ENCODE measurements at regions of chr19 and their contacts with region 1.

Region 1: GRCh38 chr19:35269421-35270117 is 807 bp downstream of the USF2 start:
- DNase-seq: peak; percentile 82 to 90 (median 88)
- H3K4me3 ChIP-seq: peak overlapping the region; percentile 49 to 92 (median 70)
- H3K27ac ChIP-seq: peak overlapping the region; percentile 75 to 99 (median 94)
- H3K27me3 ChIP-seq: no peaks in the 10 kb centered on the region
- CTCF ChIP-seq: peak; percentile 42 to 93 (median 75)

Region 2: DNA sequence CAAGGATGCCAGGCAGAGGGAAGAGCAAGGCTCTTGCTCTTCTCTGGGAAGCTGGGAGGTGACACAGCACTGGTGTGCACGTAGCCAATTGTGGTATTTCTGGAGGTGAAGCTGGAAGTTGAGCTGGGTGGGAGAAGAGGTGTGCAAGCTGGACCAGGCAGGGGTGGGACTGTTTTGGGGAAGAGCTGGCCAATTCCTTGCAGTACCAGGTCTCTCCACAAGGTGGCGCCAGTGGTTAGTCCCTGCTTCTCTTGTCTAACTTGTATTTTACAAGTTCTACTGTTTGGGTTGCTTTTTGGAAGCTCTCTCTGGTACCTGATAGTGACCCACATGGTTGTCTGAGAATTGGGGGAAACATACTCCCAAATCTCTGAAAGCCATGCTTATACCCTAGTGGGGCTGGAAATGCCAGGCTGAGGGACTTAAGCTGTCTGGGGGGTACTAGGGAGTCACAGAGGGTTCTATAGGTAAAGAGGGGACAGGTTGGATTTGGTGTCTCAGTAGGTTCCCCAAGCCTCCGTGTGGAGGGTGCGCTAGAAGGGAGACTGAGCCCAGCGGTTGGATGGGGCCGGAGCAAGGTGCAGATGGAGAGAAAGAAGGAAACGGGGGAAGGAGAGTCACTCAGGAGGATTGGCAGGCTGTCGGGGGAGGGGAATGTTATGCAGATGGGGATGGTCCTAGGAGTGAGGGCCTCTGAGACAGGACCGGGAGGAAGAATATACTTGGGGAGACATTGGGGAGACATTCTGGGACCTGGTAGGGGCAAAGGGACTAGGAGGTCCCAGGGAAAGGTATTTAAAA is 225.1 kb before region 1 on chr19:
- intact Hi-C with region 1: loop called in 1 of 2 experiments (anchors 10 kb)
- DNase-seq: peak in 9 of 10 donors; percentile 73 to 84 (median 79)
- H3K4me3 ChIP-seq: no peak overlapping the region
- H3K27ac ChIP-seq: peak overlapping the region in 53 of 59 donors; percentile 7 to 99 (median 74)
- H3K27me3 ChIP-seq: no peaks in the 10 kb centered on the region
- CTCF ChIP-seq: peak; percentile 92 to 100 (median 98)

Region 3: GRCh38 chr19:35140962-35141637 is 128.5 kb before region 1 on chr19:
- intact Hi-C with region 1: loop called (anchors 1 to 2 kb)
- DNase-seq: peak; percentile 81 to 97 (median 94)
- H3K4me3 ChIP-seq: peak overlapping the region; percentile 16 to 80 (median 61)
- H3K27ac ChIP-seq: peak overlapping the region in 55 of 59 donors; percentile 13 to 99 (median 89)
- H3K27me3 ChIP-seq: peaks cover 0 to 3% (median 0%) of the 10 kb centered on the region in 45 donors
- CTCF ChIP-seq: peak in 53 of 56 donors; percentile 15 to 72 (median 48)

Region 4: DNA sequence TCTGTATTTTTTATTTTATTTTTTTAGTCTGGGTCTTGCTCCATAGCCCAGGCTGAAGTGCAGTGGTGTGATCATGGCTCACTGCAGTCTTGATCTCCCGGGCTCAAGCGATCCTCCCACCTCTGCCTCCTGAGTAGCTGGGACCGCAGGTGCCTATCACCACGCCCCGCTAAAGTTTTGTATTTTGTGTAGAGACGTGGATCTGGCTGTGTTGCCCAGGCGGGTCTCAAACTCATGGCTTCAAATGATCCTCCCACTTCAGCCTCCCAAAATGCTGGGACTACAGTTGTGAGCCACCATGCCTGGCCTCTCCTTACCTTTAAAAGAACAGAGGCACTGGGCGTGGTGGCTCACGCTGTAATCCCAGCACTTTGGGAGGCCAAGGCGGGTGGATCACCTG is 18.1 kb after region 1 on chr19:
- intact Hi-C with region 1: loop called in 1 of 2 experiments (anchors 2 kb)
- DNase-seq: no peak
- H3K4me3 ChIP-seq: no peak overlapping the region
- H3K27ac ChIP-seq: peak overlapping the region in 5 of 59 donors; percentile 3 to 52 (median 36)
- H3K27me3 ChIP-seq: no peaks in the 10 kb centered on the region
- CTCF ChIP-seq: no peak

Region 5: DNA sequence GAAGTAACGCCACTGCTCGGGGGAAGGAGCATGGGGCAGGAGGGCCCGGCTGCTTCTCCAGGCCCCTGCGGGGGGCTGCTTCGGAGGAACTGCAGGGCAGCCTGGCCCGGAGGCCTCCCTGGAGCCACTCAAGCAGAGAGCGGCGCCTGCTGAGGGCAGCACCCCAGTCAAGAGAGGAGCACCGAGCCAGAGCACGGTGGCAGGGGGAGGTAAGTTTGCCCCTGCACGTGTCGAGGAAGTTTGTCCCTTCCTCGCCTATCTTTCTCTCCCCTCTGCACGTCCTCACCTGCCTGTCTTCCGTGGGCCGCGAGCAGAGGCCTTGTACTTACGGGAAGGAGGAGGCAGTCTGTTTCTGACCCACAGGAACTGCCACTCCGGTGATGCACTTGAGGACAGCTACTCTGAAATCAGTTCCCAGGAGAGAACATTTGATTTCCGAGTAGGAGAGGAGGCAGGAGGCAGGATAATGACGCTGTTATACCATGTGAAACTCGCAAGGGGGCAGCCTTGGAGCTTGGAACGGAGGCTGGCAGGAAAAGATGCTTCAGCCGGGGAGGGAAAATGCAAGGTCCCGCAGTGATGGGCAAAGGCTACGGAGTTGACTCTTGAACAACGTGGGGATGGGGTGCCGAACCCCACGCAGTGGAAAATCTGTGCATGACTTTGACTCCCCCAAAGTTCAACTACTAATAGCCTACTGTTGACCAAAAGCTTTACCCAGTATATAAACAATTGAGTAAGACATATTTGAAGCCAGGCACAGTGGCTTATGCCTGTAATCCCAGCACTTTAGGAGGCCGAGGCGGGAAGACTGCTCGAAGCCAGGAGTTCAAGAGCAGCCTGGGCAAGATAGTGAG is 83.1 kb after region 1 on chr19:
- intact Hi-C with region 1: loop called (anchors 2 kb)
- DNase-seq: peak; percentile 46 to 80 (median 68)
- H3K4me3 ChIP-seq: no peak overlapping the region
- H3K27ac ChIP-seq: peak overlapping the region in 13 of 59 donors; percentile 1 to 73 (median 38)
- H3K27me3 ChIP-seq: peaks cover 0 to 5% (median 0%) of the 10 kb centered on the region in 45 donors
- CTCF ChIP-seq: peak; percentile 46 to 93 (median 83)